CD8-positive, alpha-beta T cell (primary cell): ENCODE measurements at regions of chr4 and their contacts with region 1.

Region 1: GRCh38 chr4:59380841-59381366 is 1819.2 kb upstream of the ADGRL3 start:
- DNase-seq: no peak
- ATAC-seq: no peak
- H3K4me3 ChIP-seq: no peak overlapping the region
- H3K4me3 Mint-ChIP-seq: no peak overlapping the region
- H3K27ac ChIP-seq: no peak overlapping the region
- H3K27ac Mint-ChIP-seq: no peak overlapping the region
- H3K4me1 ChIP-seq: no peaks in the 10 kb centered on the region
- H3K4me1 Mint-ChIP-seq: no peaks in the 10 kb centered on the region
- H3K27me3 ChIP-seq: no peaks in the 10 kb centered on the region
- H3K27me3 Mint-ChIP-seq: no peaks in the 10 kb centered on the region
- CTCF ChIP-seq: no peak

Region 2: GRCh38 chr4:59102311-59102710 is 278.6 kb before region 1 on chr4:
- CTCF ChIA-PET with region 1: no interaction called
- POLR2A ChIA-PET with region 1: no interaction called
- intact Hi-C with region 1: no loop called
- DNase-seq: no peak
- ATAC-seq: no peak
- H3K4me3 ChIP-seq: no peak overlapping the region
- H3K4me3 Mint-ChIP-seq: no peak overlapping the region
- H3K27ac ChIP-seq: no peak overlapping the region
- H3K27ac Mint-ChIP-seq: no peak overlapping the region
- H3K4me1 ChIP-seq: no peaks in the 10 kb centered on the region
- H3K4me1 Mint-ChIP-seq: no peaks in the 10 kb centered on the region
- H3K27me3 ChIP-seq: no peaks in the 10 kb centered on the region
- H3K27me3 Mint-ChIP-seq: no peaks in the 10 kb centered on the region
- CTCF ChIP-seq: no peak

Region 3: GRCh38 chr4:59348949-59349348 is 32.0 kb before region 1 on chr4:
- CTCF ChIA-PET with region 1: no interaction called
- POLR2A ChIA-PET with region 1: no interaction called
- intact Hi-C with region 1: loop called in 1 of 2 experiments (anchors 1 kb)
- DNase-seq: no peak
- ATAC-seq: no peak
- H3K4me3 ChIP-seq: no peak overlapping the region
- H3K4me3 Mint-ChIP-seq: no peak overlapping the region
- H3K27ac ChIP-seq: no peak overlapping the region
- H3K27ac Mint-ChIP-seq: no peak overlapping the region
- H3K4me1 ChIP-seq: no peaks in the 10 kb centered on the region
- H3K4me1 Mint-ChIP-seq: no peaks in the 10 kb centered on the region
- H3K27me3 ChIP-seq: no peaks in the 10 kb centered on the region
- H3K27me3 Mint-ChIP-seq: no peaks in the 10 kb centered on the region
- CTCF ChIP-seq: no peak